CD8-positive, alpha-beta T cell (primary cell): ENCODE measurements at regions of chr20 and their contacts with region 1.

Region 1: GRCh38 chr20:20791664-20792568 is 79.5 kb upstream of the RALGAPA2 start:
- DNase-seq: no peak
- ATAC-seq: no peak
- H3K4me3 ChIP-seq: no peak overlapping the region
- H3K4me3 Mint-ChIP-seq: no peak overlapping the region
- H3K27ac ChIP-seq: no peak overlapping the region
- H3K27ac Mint-ChIP-seq: no peak overlapping the region
- H3K4me1 ChIP-seq: no peaks in the 10 kb centered on the region
- H3K4me1 Mint-ChIP-seq: no peaks in the 10 kb centered on the region
- H3K27me3 ChIP-seq: no peaks in the 10 kb centered on the region
- H3K27me3 Mint-ChIP-seq: peaks cover 6% of the 10 kb centered on the region
- CTCF ChIP-seq: no peak

Region 2: GRCh38 chr20:19875331-19876221 is 916.3 kb before region 1 on chr20:
- CTCF ChIA-PET with region 1: no interaction called
- POLR2A ChIA-PET with region 1: no interaction called
- intact Hi-C with region 1: loop called in 1 of 2 experiments (anchors 10 kb)
- DNase-seq: no peak
- ATAC-seq: no peak
- H3K4me3 ChIP-seq: no peak overlapping the region
- H3K4me3 Mint-ChIP-seq: no peak overlapping the region
- H3K27ac ChIP-seq: no peak overlapping the region
- H3K27ac Mint-ChIP-seq: no peak overlapping the region
- H3K4me1 ChIP-seq: no peaks in the 10 kb centered on the region
- H3K4me1 Mint-ChIP-seq: no peaks in the 10 kb centered on the region
- H3K27me3 ChIP-seq: no peaks in the 10 kb centered on the region
- H3K27me3 Mint-ChIP-seq: peaks cover 2% of the 10 kb centered on the region
- CTCF ChIP-seq: no peak

Region 3: DNA sequence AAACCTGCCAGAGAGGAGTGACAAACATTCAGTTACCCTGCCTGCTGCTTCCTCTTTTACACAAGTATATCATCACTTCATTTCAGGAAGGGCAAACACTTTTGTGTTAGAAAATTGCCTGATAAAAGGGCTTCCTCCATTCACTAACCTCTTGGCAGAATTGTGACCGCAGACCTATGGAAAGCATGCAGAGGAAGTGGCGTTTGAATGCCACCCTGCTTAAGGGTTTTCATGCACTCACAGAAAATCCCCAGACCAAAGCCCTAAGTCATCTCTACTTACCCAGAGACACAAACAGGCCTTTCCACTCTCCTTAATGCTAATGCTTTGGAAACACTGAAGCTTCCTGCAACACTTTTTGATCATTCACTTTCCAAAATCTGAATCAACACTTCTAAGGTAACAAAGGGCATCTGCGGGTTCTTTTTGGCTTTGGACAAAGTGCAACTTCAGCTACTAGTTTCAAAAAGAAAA is 57.4 kb before region 1 on chr20:
- CTCF ChIA-PET with region 1: no interaction called
- POLR2A ChIA-PET with region 1: no interaction called
- intact Hi-C with region 1: loop called in 1 of 2 experiments (anchors 10 kb)
- DNase-seq: peak in 2 of 9 experiments; percentile 11 to 53
- ATAC-seq: peak; percentile 23
- H3K4me3 ChIP-seq: no peak overlapping the region
- H3K4me3 Mint-ChIP-seq: no peak overlapping the region
- H3K27ac ChIP-seq: no peak overlapping the region
- H3K27ac Mint-ChIP-seq: peak overlapping the region; percentile 53
- H3K4me1 ChIP-seq: peaks cover 11% of the 10 kb centered on the region
- H3K4me1 Mint-ChIP-seq: peaks cover 14% of the 10 kb centered on the region
- H3K27me3 ChIP-seq: no peaks in the 10 kb centered on the region
- H3K27me3 Mint-ChIP-seq: no peaks in the 10 kb centered on the region
- CTCF ChIP-seq: no peak